B cell (primary cell): ENCODE measurements at regions of chr1 and their contacts with region 1.

Region 1: DNA sequence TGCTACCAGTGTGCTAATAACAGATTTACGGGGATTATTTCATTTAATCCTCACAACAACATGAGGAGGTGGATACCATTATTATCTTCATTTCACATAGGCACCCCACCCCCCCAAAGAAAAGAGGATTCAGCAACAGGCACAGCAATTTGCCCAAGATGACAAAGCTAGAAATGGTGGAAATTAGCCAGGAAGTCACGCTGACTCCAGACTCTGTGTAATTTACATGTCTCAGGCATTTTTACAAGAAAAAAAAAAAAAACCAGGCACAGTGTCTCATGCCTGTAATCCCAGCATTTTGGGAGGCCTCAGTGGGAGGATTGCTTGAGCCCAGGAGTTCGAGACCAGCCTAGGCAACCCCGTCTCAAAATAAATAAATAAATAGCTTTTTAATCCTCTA is 37.5 kb upstream of the PRDM2 start:
- DNase-seq: no peak
- ATAC-seq: no peak
- H3K4me3 ChIP-seq: no peak overlapping the region
- H3K4me3 Mint-ChIP-seq: no peak overlapping the region
- H3K27ac ChIP-seq: no peak overlapping the region
- H3K27ac Mint-ChIP-seq: no peak overlapping the region
- H3K4me1 ChIP-seq: peaks cover 22 to 23% of the 10 kb centered on the region in 2 donors
- H3K4me1 Mint-ChIP-seq: peaks cover 31% of the 10 kb centered on the region
- H3K27me3 ChIP-seq: no peaks in the 10 kb centered on the region
- H3K27me3 Mint-ChIP-seq: peaks cover 3% of the 10 kb centered on the region
- CTCF ChIP-seq: no peak

Region 2: DNA sequence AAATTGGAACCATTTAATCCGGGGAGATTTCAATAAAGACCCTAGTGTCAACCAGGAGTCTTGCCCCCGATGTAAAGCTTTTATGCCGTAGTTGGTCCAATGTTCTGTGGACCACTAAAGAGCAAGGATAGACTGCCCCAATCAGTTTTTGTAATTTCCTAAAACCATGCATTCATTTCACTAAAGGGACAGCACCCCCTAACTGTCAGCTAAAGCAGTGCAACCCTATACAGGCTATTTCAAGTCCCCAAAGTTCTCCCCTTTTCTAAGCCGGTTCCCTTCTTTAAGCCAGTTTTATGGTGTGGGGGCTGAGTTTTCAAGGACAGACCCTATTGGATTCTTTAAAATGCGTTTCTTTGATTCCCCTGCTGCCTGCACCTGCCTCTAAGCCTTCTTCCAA is 91.6 kb before region 1 on chr1:
- CTCF ChIA-PET with region 1: no interaction called
- POLR2A ChIA-PET with region 1: no interaction called
- intact Hi-C with region 1: no loop called
- DNase-seq: no peak
- ATAC-seq: no peak
- H3K4me3 ChIP-seq: no peak overlapping the region
- H3K4me3 Mint-ChIP-seq: no peak overlapping the region
- H3K27ac ChIP-seq: no peak overlapping the region
- H3K27ac Mint-ChIP-seq: no peak overlapping the region
- H3K4me1 ChIP-seq: no peaks in the 10 kb centered on the region
- H3K4me1 Mint-ChIP-seq: no peaks in the 10 kb centered on the region
- H3K27me3 ChIP-seq: peaks cover 0 to 2% (median 0%) of the 10 kb centered on the region in 4 experiments
- H3K27me3 Mint-ChIP-seq: peaks cover 24% of the 10 kb centered on the region
- CTCF ChIP-seq: peak; percentile 52

Region 3: GRCh38 chr1:13725714-13726175 is 63.3 kb after region 1 on chr1:
- CTCF ChIA-PET with region 1: interaction called, 265 read pairs
- POLR2A ChIA-PET with region 1: interaction called, 21 read pairs
- intact Hi-C with region 1: loop called (anchors 1 kb)
- DNase-seq: peak; percentile 84
- ATAC-seq: peak; percentile 35
- H3K4me3 ChIP-seq: no peak overlapping the region
- H3K4me3 Mint-ChIP-seq: peak overlapping the region; percentile 75
- H3K27ac ChIP-seq: peak overlapping the region; percentile 62 to 98
- H3K27ac Mint-ChIP-seq: peak overlapping the region; percentile 88
- H3K4me1 ChIP-seq: peaks cover 68 to 74% of the 10 kb centered on the region in 2 donors
- H3K4me1 Mint-ChIP-seq: peaks cover 90% of the 10 kb centered on the region
- H3K27me3 ChIP-seq: no peaks in the 10 kb centered on the region
- H3K27me3 Mint-ChIP-seq: no peaks in the 10 kb centered on the region
- CTCF ChIP-seq: peak; percentile 85

Region 4: GRCh38 chr1:13748610-13749505 is 86.4 kb after region 1 on chr1:
- CTCF ChIA-PET with region 1: interaction called, 54 read pairs
- POLR2A ChIA-PET with region 1: interaction called, 8 read pairs
- intact Hi-C with region 1: loop called (anchors 1 kb)
- DNase-seq: peak; percentile 97
- ATAC-seq: peak; percentile 90
- H3K4me3 ChIP-seq: peak overlapping the region; percentile 59 to 81 (median 72)
- H3K4me3 Mint-ChIP-seq: peak overlapping the region; percentile 95
- H3K27ac ChIP-seq: peak overlapping the region; percentile 86 to 90
- H3K27ac Mint-ChIP-seq: peak overlapping the region; percentile 98
- H3K4me1 ChIP-seq: peaks cover 38 to 42% of the 10 kb centered on the region in 2 donors
- H3K4me1 Mint-ChIP-seq: peaks cover 59% of the 10 kb centered on the region
- H3K27me3 ChIP-seq: no peaks in the 10 kb centered on the region
- H3K27me3 Mint-ChIP-seq: no peaks in the 10 kb centered on the region
- CTCF ChIP-seq: peak; percentile 23

Region 5: DNA sequence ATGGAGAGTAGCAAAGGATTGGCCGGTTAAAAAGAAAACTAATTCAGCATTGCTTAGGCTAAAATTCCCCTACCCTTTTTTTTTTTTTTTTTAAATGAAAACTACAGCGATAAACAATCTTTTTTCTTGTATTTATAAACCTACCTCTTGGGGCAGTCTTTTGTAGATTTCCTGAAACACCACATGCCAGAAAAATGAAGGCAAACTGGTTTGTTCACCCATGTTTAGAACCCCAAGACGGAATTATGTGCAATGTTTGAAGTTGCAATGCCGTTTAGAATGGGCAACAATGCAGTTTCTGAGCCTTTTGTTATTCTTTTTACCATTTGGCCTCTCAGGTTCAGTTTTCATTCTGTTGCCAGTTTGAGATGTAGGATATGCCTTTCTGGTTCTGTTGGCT is 96.6 kb after region 1 on chr1:
- CTCF ChIA-PET with region 1: interaction called, 54 read pairs
- POLR2A ChIA-PET with region 1: interaction called, 7 read pairs
- intact Hi-C with region 1: loop called (anchors 2 kb)
- DNase-seq: no peak
- ATAC-seq: no peak
- H3K4me3 ChIP-seq: no peak overlapping the region
- H3K4me3 Mint-ChIP-seq: peak overlapping the region; percentile 54
- H3K27ac ChIP-seq: peak overlapping the region in 1 of 2 donors; percentile 4
- H3K27ac Mint-ChIP-seq: peak overlapping the region; percentile 65
- H3K4me1 ChIP-seq: peaks cover 66 to 78% of the 10 kb centered on the region in 2 donors
- H3K4me1 Mint-ChIP-seq: peaks cover 85% of the 10 kb centered on the region
- H3K27me3 ChIP-seq: no peaks in the 10 kb centered on the region
- H3K27me3 Mint-ChIP-seq: no peaks in the 10 kb centered on the region
- CTCF ChIP-seq: no peak

Region 6: DNA sequence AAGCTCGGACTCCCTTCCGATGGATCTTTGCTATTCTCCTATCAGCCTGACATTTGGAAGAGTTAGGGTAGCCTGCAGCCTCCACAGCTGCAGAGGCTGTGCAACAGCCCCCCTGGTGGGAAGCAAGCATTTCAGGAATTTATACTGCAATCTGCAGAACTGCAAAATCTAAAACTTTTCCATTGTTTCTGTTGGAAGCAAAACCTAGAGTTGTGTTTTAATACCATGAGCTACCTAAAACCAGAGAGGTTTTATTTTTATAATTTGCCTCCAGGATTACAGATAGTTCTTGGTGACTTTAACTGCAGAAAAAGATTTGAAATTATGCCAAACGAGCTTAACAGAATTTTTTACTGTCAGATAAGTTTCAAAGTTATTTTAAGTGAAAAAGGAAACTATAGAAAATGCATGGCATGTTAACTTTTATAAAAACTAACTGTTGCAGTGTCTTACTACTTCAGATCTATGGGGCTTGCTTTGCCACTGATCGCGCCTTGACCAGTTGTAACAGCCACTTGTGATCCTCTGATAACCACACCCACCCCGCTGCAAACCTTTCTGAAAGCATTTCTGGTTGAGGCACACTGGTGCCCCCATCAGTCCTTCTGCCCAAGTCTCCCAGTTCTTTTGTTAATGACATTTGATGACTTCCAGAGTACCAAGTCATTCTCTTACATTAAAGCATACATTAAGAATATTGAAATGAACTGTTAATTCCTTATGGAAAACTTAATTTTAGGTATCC is 102.3 kb after region 1 on chr1:
- CTCF ChIA-PET with region 1: interaction called, 9 read pairs
- POLR2A ChIA-PET with region 1: no interaction called
- intact Hi-C with region 1: loop called (anchors 2 kb)
- DNase-seq: peak; percentile 36
- ATAC-seq: no peak
- H3K4me3 ChIP-seq: no peak overlapping the region
- H3K4me3 Mint-ChIP-seq: peak overlapping the region; percentile 19
- H3K27ac ChIP-seq: peak overlapping the region; percentile 26 to 66
- H3K27ac Mint-ChIP-seq: peak overlapping the region; percentile 22
- H3K4me1 ChIP-seq: peaks cover 44 to 62% of the 10 kb centered on the region in 2 donors
- H3K4me1 Mint-ChIP-seq: peaks cover 86% of the 10 kb centered on the region
- H3K27me3 ChIP-seq: no peaks in the 10 kb centered on the region
- H3K27me3 Mint-ChIP-seq: no peaks in the 10 kb centered on the region
- CTCF ChIP-seq: no peak

Region 7: GRCh38 chr1:13813398-13814012 is 151.0 kb after region 1 on chr1:
- CTCF ChIA-PET with region 1: interaction called, 13 read pairs
- POLR2A ChIA-PET with region 1: no interaction called
- intact Hi-C with region 1: loop called (anchors 1 kb)
- DNase-seq: peak; percentile 63
- ATAC-seq: peak; percentile 46
- H3K4me3 ChIP-seq: no peak overlapping the region
- H3K4me3 Mint-ChIP-seq: no peak overlapping the region
- H3K27ac ChIP-seq: no peak overlapping the region
- H3K27ac Mint-ChIP-seq: peak overlapping the region; percentile 10
- H3K4me1 ChIP-seq: peaks cover 0 to 12% of the 10 kb centered on the region in 2 donors
- H3K4me1 Mint-ChIP-seq: peaks cover 38% of the 10 kb centered on the region
- H3K27me3 ChIP-seq: no peaks in the 10 kb centered on the region
- H3K27me3 Mint-ChIP-seq: no peaks in the 10 kb centered on the region
- CTCF ChIP-seq: peak; percentile 67

Region 8: GRCh38 chr1:13892671-13893325 is 230.3 kb after region 1 on chr1:
- CTCF ChIA-PET with region 1: no interaction called
- POLR2A ChIA-PET with region 1: no interaction called
- intact Hi-C with region 1: no loop called
- DNase-seq: no peak
- ATAC-seq: no peak
- H3K4me3 ChIP-seq: no peak overlapping the region
- H3K4me3 Mint-ChIP-seq: no peak overlapping the region
- H3K27ac ChIP-seq: no peak overlapping the region
- H3K27ac Mint-ChIP-seq: no peak overlapping the region
- H3K4me1 ChIP-seq: peaks cover 0 to 9% of the 10 kb centered on the region in 2 donors
- H3K4me1 Mint-ChIP-seq: peaks cover 11% of the 10 kb centered on the region
- H3K27me3 ChIP-seq: peaks cover 0 to 56% (median 37%) of the 10 kb centered on the region in 4 experiments
- H3K27me3 Mint-ChIP-seq: peaks cover 27% of the 10 kb centered on the region
- CTCF ChIP-seq: no peak

Region 9: DNA sequence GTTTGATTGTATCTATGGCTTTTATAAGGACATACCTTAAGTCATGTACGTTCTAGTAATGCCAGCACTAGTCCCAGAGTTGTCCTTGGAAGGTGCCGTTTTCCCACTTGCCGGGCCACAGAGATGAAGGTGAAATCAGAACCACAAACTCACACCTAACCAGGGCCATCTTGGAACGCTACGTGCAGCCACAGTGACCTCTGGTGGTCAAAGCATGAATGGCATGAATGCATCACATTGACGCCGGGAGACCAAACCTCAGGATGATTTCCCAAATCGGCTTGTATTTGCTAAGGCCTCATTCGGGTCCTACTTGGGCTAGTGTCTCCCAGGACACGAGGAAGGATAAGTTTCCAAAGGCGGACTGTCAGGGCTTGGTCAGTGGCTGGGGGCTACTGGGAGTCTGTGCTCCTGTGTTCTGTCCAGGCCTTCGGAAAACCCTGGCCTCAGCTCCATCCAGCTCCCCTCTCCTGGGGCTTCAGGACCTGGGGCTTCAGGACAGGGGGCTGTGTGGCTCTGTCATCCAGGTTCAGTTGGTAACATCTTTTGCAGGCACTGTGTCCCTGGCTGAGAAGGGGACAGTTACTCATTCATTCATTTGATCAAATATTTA is 298.0 kb after region 1 on chr1:
- CTCF ChIA-PET with region 1: interaction called, 16 read pairs
- POLR2A ChIA-PET with region 1: no interaction called
- intact Hi-C with region 1: loop called (anchors 1 kb)
- DNase-seq: peak; percentile 75
- ATAC-seq: peak; percentile 58
- H3K4me3 ChIP-seq: no peak overlapping the region
- H3K4me3 Mint-ChIP-seq: no peak overlapping the region
- H3K27ac ChIP-seq: no peak overlapping the region
- H3K27ac Mint-ChIP-seq: no peak overlapping the region
- H3K4me1 ChIP-seq: no peaks in the 10 kb centered on the region
- H3K4me1 Mint-ChIP-seq: no peaks in the 10 kb centered on the region
- H3K27me3 ChIP-seq: peaks cover 0 to 14% (median 0%) of the 10 kb centered on the region in 4 experiments
- H3K27me3 Mint-ChIP-seq: peaks cover 64% of the 10 kb centered on the region
- CTCF ChIP-seq: peak; percentile 96